GM12878 (cell line): ENCODE measurements at regions of chr5 and their contacts with region 1.

Region 1: GRCh38 chr5:177133091-177133852 is at the start of gene NSD1:
- DNase-seq: peak; percentile 42
- ATAC-seq: peak; percentile 79
- H3K4me3 ChIP-seq: peak within 1 kb of the TSS; percentile 78
- H3K27ac ChIP-seq: peak within 1 kb of the TSS; percentile 83
- H3K4me1 ChIP-seq: peaks cover 27% of the 10 kb centered on the region
- H3K27me3 ChIP-seq: no peaks in the 10 kb centered on the region
- CTCF ChIP-seq: no peak
- EP300 ChIP-seq: no peak
- POLR2A ChIP-seq: peak; percentile 86
- RAD21 ChIP-seq: no peak
- polyA plus RNA-seq, gene NSD1: 7.0 to 13.1 TPM

Region 2: DNA sequence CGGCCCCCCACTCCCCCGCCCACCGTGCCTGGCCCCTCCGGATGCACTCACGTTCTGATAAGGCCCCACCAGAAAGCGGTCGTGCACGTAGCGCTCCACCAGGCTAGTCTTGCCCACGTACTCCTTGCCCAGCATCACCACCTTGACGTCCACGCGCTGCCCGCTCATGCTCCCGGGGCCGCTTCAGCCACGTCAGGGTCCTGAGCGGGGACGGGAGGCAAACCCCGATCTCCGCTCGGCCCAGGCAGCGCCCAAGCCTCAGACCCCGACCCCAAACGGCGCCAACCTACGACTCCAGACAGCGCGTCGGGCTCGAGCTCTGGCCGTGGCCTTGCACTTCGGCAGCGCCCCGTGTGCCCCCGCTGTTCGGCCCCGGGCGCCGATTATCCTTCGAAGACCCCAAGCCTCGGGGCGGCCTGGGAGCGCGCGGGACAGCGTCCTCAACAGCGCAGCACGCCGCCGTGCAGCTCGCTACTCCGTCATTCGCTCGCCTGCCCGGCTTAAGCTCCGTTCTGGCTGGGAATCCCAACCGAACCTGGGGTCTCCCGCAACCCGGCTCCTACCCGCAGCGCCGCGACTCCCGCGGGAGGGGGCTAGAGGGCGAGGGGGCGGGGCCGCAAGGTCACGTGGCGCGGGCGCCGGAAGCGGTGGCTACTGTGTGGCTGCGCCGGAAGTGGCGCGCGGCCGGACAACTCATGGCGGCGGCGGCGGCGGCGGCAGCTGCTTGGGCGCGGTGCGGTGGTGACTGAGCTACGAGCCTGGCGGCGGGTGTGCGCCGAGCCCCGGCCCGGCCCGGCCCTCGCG is 170.1 kb after region 1 on chr5 and contains the starts of genes PRELID1 and RAB24:
- CTCF ChIA-PET with region 1: no interaction called
- POLR2A ChIA-PET with region 1: interaction called, 11 read pairs
- RAD21 ChIA-PET with region 1: interaction called, 5 read pairs
- SMC1A ChIA-PET with region 1: no interaction called
- in situ Hi-C with region 1: no loop called
- intact Hi-C with region 1: loop called (anchors 5 kb)
- DNase-seq: no peak
- ATAC-seq: peak; percentile 71
- H3K4me3 ChIP-seq: peak within 1 kb of the TSS; percentile 75
- H3K27ac ChIP-seq: peak within 1 kb of the TSS; percentile 90
- H3K4me1 ChIP-seq: peaks cover 42% of the 10 kb centered on the region
- H3K27me3 ChIP-seq: no peaks in the 10 kb centered on the region
- CTCF ChIP-seq: peak; percentile 23 to 52 (median 34); a peak in 4 of 6 replicates
- EP300 ChIP-seq: no peak
- POLR2A ChIP-seq: peak; percentile 54
- RAD21 ChIP-seq: no peak
- polyA plus RNA-seq, gene PRELID1: 30.9 to 106 TPM
- polyA plus RNA-seq, gene RAB24: 8.0 to 12.8 TPM

Region 3: DNA sequence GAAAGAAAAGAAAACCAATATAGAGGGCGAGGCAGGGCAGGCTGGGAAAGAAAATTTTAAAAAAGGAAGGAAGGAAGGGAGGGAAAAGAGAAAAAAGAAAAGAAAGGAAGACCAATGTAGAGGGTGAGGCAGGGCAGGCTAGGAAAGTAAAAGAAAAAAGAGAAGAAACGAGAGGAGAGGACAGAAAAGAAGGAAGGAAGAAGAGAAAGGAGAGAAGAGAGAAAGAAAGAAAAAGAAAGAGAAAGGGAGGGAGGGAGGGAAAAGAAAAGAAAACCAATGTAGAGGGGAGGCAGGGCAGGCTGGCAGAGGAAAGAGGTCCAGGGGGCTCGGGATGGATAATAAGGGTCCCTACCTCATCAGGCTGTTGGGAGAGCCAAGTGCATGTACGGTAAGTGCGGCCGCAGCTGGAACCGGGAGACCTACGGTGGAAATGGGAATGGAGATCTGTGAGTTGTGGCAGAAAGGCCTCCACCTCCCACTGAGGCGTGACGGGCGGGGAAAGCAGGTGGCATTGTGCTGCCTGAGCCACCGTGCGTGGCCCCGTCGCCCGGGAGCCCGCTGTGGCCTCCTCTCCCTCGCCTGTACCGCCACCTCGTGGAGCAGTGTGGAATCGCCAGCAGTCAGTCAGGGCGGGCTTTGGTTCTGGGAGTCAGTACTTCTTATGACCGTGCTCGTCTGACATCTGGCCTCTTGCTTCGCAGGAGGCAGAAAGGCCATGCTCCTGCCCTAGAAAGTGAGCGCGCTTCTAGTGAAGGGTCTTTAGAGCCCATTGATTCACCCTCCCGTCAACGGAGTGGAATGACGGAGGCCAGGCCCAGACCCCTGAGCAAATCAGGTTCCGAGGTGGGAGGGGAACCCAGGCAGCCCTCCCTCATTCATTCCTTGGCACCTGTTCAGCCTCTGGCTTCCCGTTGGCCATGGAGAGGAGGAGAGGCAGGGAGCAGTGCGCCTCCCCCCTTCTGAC is 1030.8 kb after region 1 on chr5:
- CTCF ChIA-PET with region 1: no interaction called
- POLR2A ChIA-PET with region 1: no interaction called
- RAD21 ChIA-PET with region 1: no interaction called
- SMC1A ChIA-PET with region 1: no interaction called
- in situ Hi-C with region 1: no loop called
- intact Hi-C with region 1: no loop called
- DNase-seq: peak; percentile 34
- ATAC-seq: peak; percentile 98
- H3K4me3 ChIP-seq: no peak overlapping the region
- H3K27ac ChIP-seq: no peak overlapping the region
- H3K4me1 ChIP-seq: no peaks in the 10 kb centered on the region
- H3K27me3 ChIP-seq: no peaks in the 10 kb centered on the region
- CTCF ChIP-seq: peak; percentile 99 to 100 (median 99); a peak in 5 of 6 replicates
- EP300 ChIP-seq: no peak
- POLR2A ChIP-seq: no peak
- RAD21 ChIP-seq: peak; percentile 99